PC-9 (cell line): ENCODE measurements at regions of chr1 and their contacts with region 1.

Region 1: DNA sequence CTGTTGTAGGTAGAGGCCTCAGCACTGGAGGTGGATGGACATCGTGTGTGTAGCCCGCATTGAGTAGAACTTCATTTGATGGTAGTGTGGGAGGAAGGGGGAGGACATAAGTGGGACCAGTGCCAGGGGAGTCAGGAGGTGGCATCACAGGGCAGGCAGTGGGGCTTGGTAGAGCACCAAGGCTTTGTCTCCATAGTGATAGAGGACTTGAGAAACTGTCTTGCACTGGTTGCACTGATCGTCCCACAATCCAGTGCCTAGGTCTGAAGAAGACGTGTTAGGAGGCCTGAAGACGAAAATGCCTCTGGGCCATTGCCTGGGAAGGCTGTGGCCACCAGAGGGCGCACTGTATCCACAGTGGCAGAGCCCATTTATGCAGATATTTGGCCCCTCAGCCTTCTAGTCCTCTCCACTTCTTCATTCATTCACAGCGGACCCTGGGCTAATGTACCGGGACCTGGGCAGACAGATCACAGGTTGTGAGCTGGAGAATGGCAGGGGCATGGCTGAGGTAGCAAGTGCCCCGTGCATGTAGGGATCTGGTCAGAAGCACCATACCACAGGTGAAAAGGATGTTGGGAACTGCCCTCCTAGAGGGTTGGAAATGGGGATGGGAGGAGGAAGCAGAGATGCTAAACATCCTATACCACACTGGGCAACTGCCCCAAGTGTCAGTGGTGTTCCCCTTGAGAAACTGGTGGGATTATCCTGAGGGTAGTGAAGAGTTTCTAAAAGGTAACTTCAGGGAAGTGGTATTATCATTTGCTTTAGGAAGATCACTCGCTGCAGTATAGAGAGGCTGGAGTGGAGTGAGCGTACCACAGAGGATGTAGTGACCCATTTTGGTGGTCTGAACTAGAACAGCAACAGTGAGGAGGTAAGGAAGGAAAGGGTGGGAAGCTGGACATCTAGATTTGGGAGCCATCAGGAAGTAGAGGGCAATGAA is 95.3 kb downstream of the PIK3R3 start:
- DNase-seq: peak; percentile 66 to 87
- H3K4me3 ChIP-seq: no peak overlapping the region
- H3K27ac ChIP-seq: no peak overlapping the region; the same call in 1 of the 2 replicates
- H3K4me1 ChIP-seq: peaks cover 24% of the 10 kb centered on the region
- H3K27me3 ChIP-seq: no peaks in the 10 kb centered on the region
- CTCF ChIP-seq: peak; percentile 97

Region 2: GRCh38 chr1:46098027-46098712 is 61.0 kb after region 1 on chr1:
- CTCF ChIA-PET with region 1: interaction called, 14 read pairs
- POLR2A ChIA-PET with region 1: no interaction called
- intact Hi-C with region 1: no loop called
- DNase-seq: no peak
- H3K4me3 ChIP-seq: no peak overlapping the region
- H3K27ac ChIP-seq: no peak overlapping the region
- H3K4me1 ChIP-seq: 0 out of 2 replicates have a peak, but pooled peaks cover 5% of the 10 kb centered on the region
- H3K27me3 ChIP-seq: no peaks in the 10 kb centered on the region
- CTCF ChIP-seq: no peak